SK-MEL-5 (cell line): ENCODE measurements at regions of chr6 and their contacts with region 1.

Region 1: GRCh38 chr6:99588618-99589289 is 17.9 kb upstream of the PRDM13 start:
- DNase-seq: peak; percentile 82

Region 2: DNA sequence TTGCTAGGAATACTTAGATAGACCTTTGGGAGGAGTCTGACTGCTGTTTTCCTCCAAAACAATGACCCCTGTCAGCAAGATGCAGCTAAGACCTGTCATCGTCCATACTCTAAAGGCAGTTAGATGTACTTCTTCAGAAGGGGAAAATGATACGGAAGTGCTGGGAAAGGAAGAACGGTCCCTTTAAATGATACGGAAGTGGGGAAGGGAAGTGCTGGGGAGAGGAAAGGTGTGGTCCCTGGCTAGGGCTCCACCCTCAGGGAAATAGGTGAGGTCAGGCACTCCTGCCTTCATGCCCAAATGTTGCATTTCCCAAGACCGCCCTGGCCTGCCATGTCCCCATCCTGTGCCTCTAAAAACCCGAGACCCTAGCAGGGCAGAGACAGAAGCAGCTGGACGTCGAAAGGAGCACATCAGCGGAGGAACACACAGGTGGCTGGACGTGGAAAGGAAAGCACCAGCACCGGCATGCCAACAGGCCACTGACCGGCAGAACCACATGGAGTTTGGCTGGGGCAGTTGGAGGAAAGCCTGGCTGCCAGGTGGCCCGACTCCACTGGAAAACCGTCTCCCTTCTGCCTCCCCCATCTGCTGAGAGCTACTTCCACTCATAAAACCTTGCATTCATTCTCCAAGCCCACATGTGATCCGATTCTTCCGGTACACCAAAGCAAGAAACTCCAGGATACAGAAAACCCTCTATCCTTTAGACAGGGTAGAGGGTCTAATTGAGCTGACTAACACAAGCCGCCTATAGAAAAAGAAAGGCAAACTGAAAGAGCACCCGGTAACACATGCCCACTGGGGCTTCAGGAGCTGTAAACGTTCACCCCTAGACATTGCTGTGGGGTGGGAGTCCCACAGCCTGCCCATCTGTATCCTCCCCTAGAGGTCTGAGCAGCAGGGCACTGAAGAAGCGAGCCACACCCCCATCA is 333.9 kb before region 1 on chr6:
- in situ Hi-C with region 1: no loop called
- DNase-seq: peak; percentile 95

Region 3: GRCh38 chr6:99530627-99531026 is 58.1 kb before region 1 on chr6:
- in situ Hi-C with region 1: loop called (anchors 10 kb)
- DNase-seq: no peak